ENCODE measurements at regions of chr16 and their contacts with region 1.

Region 1: DNA sequence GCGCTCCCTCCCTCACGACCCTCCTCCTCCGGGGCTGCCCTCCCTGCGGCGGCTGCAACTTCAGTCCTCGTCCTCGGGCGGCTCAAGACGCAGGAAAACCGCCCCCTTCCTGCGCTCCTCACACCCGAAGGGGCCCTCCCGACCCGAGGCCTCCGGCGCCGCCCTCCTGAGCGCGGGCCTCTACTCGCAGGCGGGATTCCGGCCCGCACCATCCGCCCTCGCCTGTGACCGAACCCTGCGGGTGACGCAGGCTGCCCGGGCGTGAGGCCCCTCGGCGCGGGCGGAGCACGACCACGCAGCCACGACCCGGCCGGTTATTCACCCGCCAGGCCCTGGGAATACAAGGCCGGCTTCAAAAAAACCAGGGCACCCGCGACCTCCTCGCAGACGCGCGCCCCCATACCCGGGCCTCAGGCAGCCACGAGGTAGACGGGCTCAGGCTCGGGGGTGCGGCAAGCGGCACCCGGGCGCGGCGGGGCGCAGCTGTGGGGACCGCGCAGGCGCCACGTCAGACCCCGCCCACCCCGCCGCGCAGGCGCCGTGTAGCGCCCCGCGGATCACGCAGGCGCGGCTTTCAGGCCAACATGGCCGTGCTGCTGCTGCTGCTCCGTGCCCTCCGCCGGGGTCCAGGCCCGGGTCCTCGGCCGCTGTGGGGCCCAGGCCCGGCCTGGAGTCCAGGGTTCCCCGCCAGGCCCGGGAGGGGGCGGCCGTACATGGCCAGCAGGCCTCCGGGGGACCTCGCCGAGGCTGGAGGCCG is at the start of gene SPG7:
- DNase-seq: peak; percentile 81
- H3K4me3 Mint-ChIP-seq: peak within 1 kb of the TSS; percentile 77
- H3K27ac Mint-ChIP-seq: peak within 1 kb of the TSS; percentile 59
- H3K4me1 Mint-ChIP-seq: peaks cover 15% of the 10 kb centered on the region
- H3K27me3 Mint-ChIP-seq: no peaks in the 10 kb centered on the region
- CTCF ChIP-seq: no peak
- total RNA-seq, gene SPG7: 82.4 and 92.3 TPM in 2 replicates

Region 2: GRCh38 chr16:89241187-89242007 is 266.6 kb before region 1 on chr16:
- CTCF ChIA-PET with region 1: no interaction called
- POLR2A ChIA-PET with region 1: interaction called, 10 read pairs
- intact Hi-C with region 1: loop called (anchors 2 kb)
- DNase-seq: peak; percentile 69
- H3K4me3 Mint-ChIP-seq: peak overlapping the region; percentile 94
- H3K27ac Mint-ChIP-seq: peak overlapping the region; percentile 95
- H3K4me1 Mint-ChIP-seq: no peaks in the 10 kb centered on the region
- H3K27me3 Mint-ChIP-seq: no peaks in the 10 kb centered on the region
- CTCF ChIP-seq: no peak

Region 3: DNA sequence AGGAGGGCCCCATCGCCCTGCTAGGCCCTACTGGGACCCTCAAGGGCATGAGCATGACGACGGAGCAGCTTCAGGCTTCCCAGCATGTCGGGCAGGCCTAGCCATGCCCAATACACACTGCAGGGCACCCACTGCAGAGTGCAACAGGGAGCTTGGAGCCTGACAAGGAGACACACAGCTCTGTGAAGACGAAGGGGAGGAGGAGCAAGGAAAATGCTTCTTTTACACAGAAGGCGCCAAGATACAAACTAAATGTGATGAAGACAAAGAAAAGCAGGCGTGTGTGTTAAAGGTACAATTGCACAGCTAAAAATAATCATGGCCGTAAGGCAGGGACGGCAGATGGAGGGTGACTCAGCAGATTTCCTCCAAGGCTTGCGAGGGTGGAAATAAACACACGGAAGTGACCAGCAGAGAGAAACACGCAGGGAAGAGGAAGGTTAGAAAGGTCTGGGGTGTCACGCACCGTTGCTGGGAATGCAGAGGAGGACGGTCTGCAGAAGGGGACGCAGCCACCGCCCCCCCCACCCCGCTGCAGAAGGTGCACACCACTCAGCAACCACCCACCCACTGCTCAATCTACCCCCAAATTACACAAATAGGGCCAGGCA is 182.0 kb before region 1 on chr16:
- CTCF ChIA-PET with region 1: interaction called, 4 read pairs
- POLR2A ChIA-PET with region 1: interaction called, 13 read pairs
- intact Hi-C with region 1: no loop called
- DNase-seq: peak; percentile 68
- H3K4me3 Mint-ChIP-seq: peak overlapping the region; percentile 65
- H3K27ac Mint-ChIP-seq: peak overlapping the region; percentile 68
- H3K4me1 Mint-ChIP-seq: peaks cover 57% of the 10 kb centered on the region
- H3K27me3 Mint-ChIP-seq: no peaks in the 10 kb centered on the region
- CTCF ChIP-seq: no peak

Region 4: DNA sequence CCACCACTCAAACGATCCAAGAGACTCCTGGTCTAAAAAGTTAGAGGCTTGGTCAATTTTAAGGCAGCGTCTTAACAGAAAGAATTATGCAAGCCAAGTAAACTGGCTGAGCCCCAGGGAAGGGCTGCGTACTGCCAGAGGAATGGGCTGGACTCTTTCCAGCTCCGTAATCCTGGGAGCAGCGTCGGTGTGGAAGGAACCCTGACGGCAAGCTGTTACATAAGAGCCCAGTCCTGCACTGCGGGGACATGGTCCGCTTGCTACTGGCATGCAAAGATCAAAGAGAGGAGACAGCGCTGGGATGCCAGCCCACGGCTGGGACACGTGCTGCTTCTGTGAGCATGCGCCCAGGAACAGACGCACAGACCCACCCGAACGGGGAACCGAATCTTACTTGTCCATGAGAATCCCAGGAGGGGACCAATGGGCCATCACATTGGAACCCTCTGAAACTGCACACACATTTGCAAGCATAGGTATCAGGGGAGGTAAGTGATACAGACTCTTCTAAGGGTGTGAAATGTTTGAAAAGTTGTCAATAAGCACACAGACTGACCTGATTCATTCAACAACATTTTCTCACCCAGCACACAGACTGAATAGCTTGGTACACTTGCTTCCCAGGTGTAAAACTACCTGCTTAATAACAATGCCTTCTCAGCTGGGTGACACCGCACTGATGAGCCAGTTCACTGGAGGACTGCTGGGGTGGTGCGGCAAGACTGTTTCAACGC is 112.7 kb before region 1 on chr16:
- CTCF ChIA-PET with region 1: no interaction called
- POLR2A ChIA-PET with region 1: interaction called, 4 read pairs
- intact Hi-C with region 1: loop called (anchors 5 kb)
- DNase-seq: peak; percentile 98
- H3K4me3 Mint-ChIP-seq: peak overlapping the region; percentile 14
- H3K27ac Mint-ChIP-seq: peak overlapping the region; percentile 52
- H3K4me1 Mint-ChIP-seq: peaks cover 29% of the 10 kb centered on the region
- H3K27me3 Mint-ChIP-seq: no peaks in the 10 kb centered on the region
- CTCF ChIP-seq: no peak

Region 5: GRCh38 chr16:89458551-89458950 is 49.5 kb before region 1 on chr16:
- CTCF ChIA-PET with region 1: interaction called, 4 read pairs
- POLR2A ChIA-PET with region 1: interaction called, 10 read pairs
- intact Hi-C with region 1: no loop called
- DNase-seq: peak; percentile 71
- H3K4me3 Mint-ChIP-seq: peak overlapping the region; percentile 18
- H3K27ac Mint-ChIP-seq: peak overlapping the region; percentile 83
- H3K4me1 Mint-ChIP-seq: peaks cover 23% of the 10 kb centered on the region
- H3K27me3 Mint-ChIP-seq: no peaks in the 10 kb centered on the region
- CTCF ChIP-seq: no peak

Region 6: GRCh38 chr16:89560378-89561141 is 52.5 kb after region 1 on chr16 and contains the start of gene RPL13:
- CTCF ChIA-PET with region 1: no interaction called
- POLR2A ChIA-PET with region 1: interaction called, 26 read pairs
- intact Hi-C with region 1: no loop called
- DNase-seq: peak; percentile 96
- H3K4me3 Mint-ChIP-seq: peak within 1 kb of the TSS; percentile 91
- H3K27ac Mint-ChIP-seq: peak within 1 kb of the TSS; percentile 99
- H3K4me1 Mint-ChIP-seq: peaks cover 24% of the 10 kb centered on the region
- H3K27me3 Mint-ChIP-seq: no peaks in the 10 kb centered on the region
- CTCF ChIP-seq: no peak
- total RNA-seq, gene RPL13: 3,133 and 3,148 TPM in 2 replicates

Region 7: GRCh38 chr16:89615596-89616090 is 107.6 kb after region 1 on chr16:
- CTCF ChIA-PET with region 1: no interaction called
- POLR2A ChIA-PET with region 1: no interaction called
- intact Hi-C with region 1: no loop called
- DNase-seq: no peak
- H3K4me3 Mint-ChIP-seq: no peak overlapping the region
- H3K27ac Mint-ChIP-seq: no peak overlapping the region
- H3K4me1 Mint-ChIP-seq: peaks cover 7% of the 10 kb centered on the region
- H3K27me3 Mint-ChIP-seq: no peaks in the 10 kb centered on the region
- CTCF ChIP-seq: peak; percentile 51